ENCODE measurements at regions of chr20 and their contacts with region 1.

Region 1: GRCh38 chr20:44960103-44960852 is at the start of gene TOMM34:
- DNase-seq: peak; percentile 94
- H3K4me3 Mint-ChIP-seq: peak within 1 kb of the TSS; percentile 95
- H3K27ac Mint-ChIP-seq: peak within 1 kb of the TSS; percentile 84
- H3K4me1 Mint-ChIP-seq: peaks cover 72% of the 10 kb centered on the region
- H3K27me3 Mint-ChIP-seq: no peaks in the 10 kb centered on the region
- total RNA-seq, gene TOMM34: 16.0 to 16.4 TPM

Region 2: GRCh38 chr20:44642203-44643153 is 317.8 kb before region 1 on chr20:
- CTCF ChIA-PET with region 1: no interaction called
- POLR2A ChIA-PET with region 1: no interaction called
- DNase-seq: peak; percentile 45
- H3K4me3 Mint-ChIP-seq: peak overlapping the region; percentile 37
- H3K27ac Mint-ChIP-seq: peak overlapping the region; percentile 93
- H3K4me1 Mint-ChIP-seq: peaks cover 76% of the 10 kb centered on the region
- H3K27me3 Mint-ChIP-seq: no peaks in the 10 kb centered on the region

Region 3: DNA sequence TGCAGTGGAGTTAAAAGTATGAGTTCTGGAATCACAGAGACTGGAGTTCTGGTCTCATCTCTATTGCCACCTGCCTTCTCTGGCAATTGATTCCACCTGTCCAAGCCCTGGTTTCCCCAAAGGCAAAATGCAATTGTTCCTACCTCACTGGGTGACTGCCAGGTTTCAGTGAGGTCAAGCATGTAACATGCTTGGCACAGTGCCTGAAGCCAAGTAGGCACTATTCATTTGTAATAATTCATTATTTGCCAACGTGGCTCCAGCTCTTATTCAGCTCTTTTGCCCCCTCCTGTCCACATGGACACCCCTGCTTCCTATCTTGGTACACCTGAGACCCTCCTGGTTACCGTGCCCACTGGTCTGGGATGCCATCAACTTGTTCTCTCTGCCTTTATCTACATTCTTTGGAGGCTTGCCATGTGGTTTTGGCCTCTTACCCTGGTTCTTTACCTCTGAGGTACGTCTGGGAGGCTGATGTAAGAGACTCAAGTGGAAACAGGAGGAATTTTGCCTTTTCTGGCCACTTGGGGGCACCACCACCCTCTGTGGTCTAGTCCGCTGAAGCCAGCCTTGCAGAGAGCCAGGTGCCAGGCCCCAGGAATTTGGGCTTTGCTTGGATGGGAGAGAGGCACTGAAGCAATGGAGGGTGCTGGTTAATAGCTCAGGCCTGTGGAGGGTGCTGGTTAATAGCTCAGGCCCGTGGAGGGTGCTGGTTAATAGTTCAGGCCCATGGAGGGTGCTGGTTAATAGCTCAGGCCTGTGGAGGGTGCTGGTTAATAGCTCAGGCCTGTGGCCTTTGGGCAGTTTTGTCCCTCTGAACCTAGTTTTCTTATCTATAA is 212.9 kb before region 1 on chr20:
- CTCF ChIA-PET with region 1: no interaction called
- POLR2A ChIA-PET with region 1: no interaction called
- DNase-seq: peak; percentile 62
- H3K4me3 Mint-ChIP-seq: no peak overlapping the region
- H3K27ac Mint-ChIP-seq: no peak overlapping the region
- H3K4me1 Mint-ChIP-seq: peaks cover 10% of the 10 kb centered on the region
- H3K27me3 Mint-ChIP-seq: peaks cover 28% of the 10 kb centered on the region

Region 4: GRCh38 chr20:44979090-44979621 is 18.9 kb after region 1 on chr20:
- CTCF ChIA-PET with region 1: interaction called, 7 read pairs
- POLR2A ChIA-PET with region 1: interaction called, 105 read pairs
- DNase-seq: peak; percentile 79
- H3K4me3 Mint-ChIP-seq: peak overlapping the region; percentile 72
- H3K27ac Mint-ChIP-seq: peak overlapping the region; percentile 99
- H3K4me1 Mint-ChIP-seq: peaks cover 71% of the 10 kb centered on the region
- H3K27me3 Mint-ChIP-seq: no peaks in the 10 kb centered on the region

Region 5: DNA sequence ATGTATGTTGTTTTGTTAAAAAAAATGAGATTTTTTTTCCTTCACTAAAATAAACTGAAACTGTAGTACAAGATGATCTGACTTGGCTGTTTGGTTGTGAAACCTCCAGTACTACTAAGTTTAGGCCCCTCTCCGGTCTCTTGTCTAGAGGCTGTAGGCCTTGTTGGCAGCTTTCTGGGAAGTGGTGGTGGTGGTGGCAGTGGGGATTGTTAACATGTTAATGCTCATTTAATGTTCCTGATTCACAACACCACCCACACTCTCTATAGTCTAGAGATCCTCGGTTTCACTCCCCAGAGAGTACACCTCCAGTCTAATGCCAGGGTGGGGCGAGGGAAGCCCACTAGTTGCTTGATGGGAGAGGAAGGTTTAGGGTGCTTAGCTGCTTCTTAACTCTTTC is 30.1 kb after region 1 on chr20:
- CTCF ChIA-PET with region 1: interaction called, 5 read pairs
- POLR2A ChIA-PET with region 1: interaction called, 17 read pairs
- DNase-seq: peak; percentile 50
- H3K4me3 Mint-ChIP-seq: peak overlapping the region; percentile 72
- H3K27ac Mint-ChIP-seq: peak overlapping the region; percentile 88
- H3K4me1 Mint-ChIP-seq: peaks cover 73% of the 10 kb centered on the region
- H3K27me3 Mint-ChIP-seq: no peaks in the 10 kb centered on the region